ENCODE measurements at regions of chr7 and their contacts with region 1.

Region 1: GRCh38 chr7:101903993-101904392 is 86.6 kb downstream of the CUX1 start:
- DNase-seq: no peak
- H3K4me3 ChIP-seq: no peak overlapping the region
- H3K27ac ChIP-seq: no peak overlapping the region
- H3K4me1 ChIP-seq: no peaks in the 10 kb centered on the region
- H3K27me3 ChIP-seq: no peaks in the 10 kb centered on the region
- CTCF ChIP-seq: no peak
- POLR2A ChIP-seq: no peak

Region 2: DNA sequence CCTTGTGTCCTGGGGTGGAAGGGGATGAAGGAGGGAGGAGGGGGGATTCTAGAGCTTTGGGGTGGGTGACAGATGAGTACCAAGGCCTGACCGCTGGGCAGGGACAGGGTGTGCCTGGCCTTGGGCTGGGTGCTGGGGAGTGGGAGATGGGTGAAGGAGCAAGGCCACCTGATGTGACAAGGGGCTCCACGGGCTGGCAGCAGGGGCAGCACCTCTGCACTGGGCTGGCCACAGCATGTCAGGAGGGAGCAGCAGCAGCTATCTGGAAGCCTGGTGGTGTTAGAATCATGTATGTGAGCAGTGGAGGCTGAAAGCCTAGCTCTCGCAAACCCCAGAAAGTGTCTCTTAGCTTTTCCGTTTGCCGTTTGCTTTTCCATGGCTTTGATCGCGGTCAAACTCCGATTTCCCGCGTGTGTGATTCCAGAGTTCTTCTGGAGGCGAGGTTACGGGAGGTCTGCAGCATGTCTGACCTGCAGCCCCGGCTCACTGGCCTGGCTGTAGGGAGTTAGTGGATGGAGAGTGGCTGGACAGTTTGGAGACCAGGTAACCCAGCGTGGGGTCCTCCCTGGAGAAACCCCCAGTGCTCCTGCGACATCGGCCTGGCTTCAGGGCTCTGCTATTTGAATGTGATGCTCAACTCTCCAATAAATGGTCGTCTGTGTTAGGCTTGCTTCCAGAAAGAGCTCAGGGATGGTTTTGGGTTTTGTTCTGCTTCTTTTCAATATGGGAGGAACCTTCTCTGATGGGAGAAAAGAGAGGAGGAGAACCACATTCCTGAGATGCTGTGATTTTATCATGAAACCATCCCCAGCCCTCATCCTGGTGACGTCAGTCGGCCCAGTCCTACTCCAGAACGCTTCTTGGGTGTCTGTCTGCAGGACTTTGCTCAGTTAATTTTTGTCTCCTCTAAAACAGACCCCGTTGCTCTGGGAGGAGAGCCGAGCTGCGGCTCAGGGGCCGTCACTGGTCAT is 18.9 kb after region 1 on chr7:
- intact Hi-C with region 1: loop called (anchors 1 kb)
- DNase-seq: peak in 1 of 2 donors; percentile 12
- H3K4me3 ChIP-seq: no peak overlapping the region
- H3K27ac ChIP-seq: no peak overlapping the region
- H3K4me1 ChIP-seq: no peaks in the 10 kb centered on the region
- H3K27me3 ChIP-seq: no peaks in the 10 kb centered on the region
- CTCF ChIP-seq: no peak
- POLR2A ChIP-seq: no peak

Measured in breast epithelium (tissue), 4 donors.